ENCODE measurements at regions of chr1 and their contacts with region 1.

Region 1: GRCh38 chr1:186806477-186806876 is 22.3 kb upstream of the PLA2G4A start:
- DNase-seq: no peak
- H3K4me3 Mint-ChIP-seq: no peak overlapping the region
- H3K27ac Mint-ChIP-seq: no peak overlapping the region
- H3K4me1 Mint-ChIP-seq: no peaks in the 10 kb centered on the region
- H3K27me3 Mint-ChIP-seq: no peaks in the 10 kb centered on the region

Region 2: GRCh38 chr1:186605762-186606350 is 200.6 kb before region 1 on chr1:
- intact Hi-C with region 1: loop called (anchors 5 kb)
- DNase-seq: peak; percentile 11
- H3K4me3 Mint-ChIP-seq: no peak overlapping the region
- H3K27ac Mint-ChIP-seq: no peak overlapping the region
- H3K4me1 Mint-ChIP-seq: no peaks in the 10 kb centered on the region
- H3K27me3 Mint-ChIP-seq: peaks cover 51% of the 10 kb centered on the region

Region 3: GRCh38 chr1:186722711-186723309 is 83.7 kb before region 1 on chr1:
- intact Hi-C with region 1: loop called (anchors 1 kb)
- DNase-seq: no peak
- H3K4me3 Mint-ChIP-seq: no peak overlapping the region
- H3K27ac Mint-ChIP-seq: no peak overlapping the region
- H3K4me1 Mint-ChIP-seq: no peaks in the 10 kb centered on the region
- H3K27me3 Mint-ChIP-seq: peaks cover 5% of the 10 kb centered on the region

Region 4: GRCh38 chr1:186875896-186876835 is 69.7 kb after region 1 on chr1:
- intact Hi-C with region 1: no loop called
- DNase-seq: no peak
- H3K4me3 Mint-ChIP-seq: no peak overlapping the region
- H3K27ac Mint-ChIP-seq: no peak overlapping the region
- H3K4me1 Mint-ChIP-seq: no peaks in the 10 kb centered on the region
- H3K27me3 Mint-ChIP-seq: no peaks in the 10 kb centered on the region

Region 5: DNA sequence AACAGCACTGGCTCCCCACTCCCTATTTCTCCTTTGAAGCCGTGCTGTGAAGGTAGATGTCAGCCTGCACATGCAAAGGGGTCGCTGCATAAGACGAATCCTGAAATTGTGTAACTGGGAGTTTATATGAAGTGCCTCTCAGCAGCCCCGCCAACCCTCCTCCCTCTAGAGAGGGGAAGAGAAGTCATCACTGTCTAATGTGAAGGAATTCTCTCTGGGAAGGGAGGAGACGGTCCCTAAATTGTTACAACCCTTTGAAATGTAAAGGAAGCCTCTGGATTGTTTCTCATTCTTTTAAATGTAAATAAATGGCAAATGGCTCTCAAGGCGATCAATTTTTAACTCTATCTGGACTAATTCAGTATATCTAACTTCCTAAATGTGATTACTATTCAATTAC is 567.7 kb after region 1 on chr1:
- intact Hi-C with region 1: no loop called
- DNase-seq: no peak
- H3K4me3 Mint-ChIP-seq: no peak overlapping the region
- H3K27ac Mint-ChIP-seq: no peak overlapping the region
- H3K4me1 Mint-ChIP-seq: no peaks in the 10 kb centered on the region
- H3K27me3 Mint-ChIP-seq: no peaks in the 10 kb centered on the region

Measured in activated T-helper 1 cell treated with anti-CD3 and anti-CD28 coated beads, Interleukin-12 subunit alpha, Interleukin-12 subunit beta, Interleukin-2, Interleukin-4 antibody, amounts not matched to agents 30 ng/mL and 10 ng/mL and 1 ng/mL, durations not matched to agents 14 hours and 24 hours and 36 hours (primary cell).